Activated CD8-positive, alpha-beta memory T cell treated with anti-CD3 and anti-CD28 coated beads, Interleukin-2, amount 10 ng/mL, durations not matched to agents 7 days and 5 days (primary cell): ENCODE measurements at regions of chr11 and their contacts with region 1.

Region 1: DNA sequence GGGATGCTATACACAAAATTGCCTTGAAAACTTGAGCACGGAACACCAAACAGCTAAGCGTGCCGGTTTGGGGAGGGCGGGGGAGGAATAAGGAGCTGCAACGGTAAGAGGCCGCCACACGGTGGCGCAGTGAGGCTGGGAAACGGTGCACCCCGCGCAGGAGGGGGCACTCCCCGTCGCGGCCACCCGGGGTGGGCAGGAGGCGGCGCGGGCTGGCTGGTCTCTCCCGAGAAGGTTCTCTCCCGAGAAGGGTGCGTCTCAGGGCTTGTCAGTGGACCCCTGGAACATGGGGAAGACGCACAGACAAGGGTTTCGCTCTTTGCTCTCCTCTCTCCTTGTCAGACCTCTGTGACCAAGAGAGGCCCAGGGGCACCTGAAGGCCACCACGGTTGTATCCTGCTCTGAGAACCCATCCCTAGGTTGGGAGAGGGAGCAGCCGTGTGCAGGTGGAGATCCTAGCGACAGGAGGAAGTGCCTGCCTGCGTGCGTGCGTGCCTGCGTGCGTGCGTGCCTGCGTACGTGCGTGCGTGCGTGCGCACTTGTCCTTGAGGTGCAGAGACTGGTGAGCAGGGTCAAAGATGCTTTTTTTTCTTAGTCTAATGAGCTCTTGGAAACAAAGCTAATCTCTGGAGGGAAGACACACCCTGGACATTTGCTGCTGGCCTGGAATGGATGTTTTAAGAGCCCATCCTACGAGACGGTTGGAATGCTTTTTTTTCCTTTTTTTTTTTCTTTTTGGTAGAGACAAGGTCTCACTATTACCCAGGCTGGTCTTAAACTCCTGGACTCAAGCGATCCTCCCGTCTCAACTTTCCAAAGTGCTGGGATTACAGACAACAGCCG is 18.1 kb upstream of the JAM3 start:
- DNase-seq: peak; percentile 78
- ATAC-seq: peak; percentile 96
- H3K4me3 Mint-ChIP-seq: no peak overlapping the region
- H3K27ac Mint-ChIP-seq: peak overlapping the region; percentile 56
- H3K4me1 Mint-ChIP-seq: peaks cover 6% of the 10 kb centered on the region
- H3K27me3 Mint-ChIP-seq: peaks cover 18% of the 10 kb centered on the region

Region 2: DNA sequence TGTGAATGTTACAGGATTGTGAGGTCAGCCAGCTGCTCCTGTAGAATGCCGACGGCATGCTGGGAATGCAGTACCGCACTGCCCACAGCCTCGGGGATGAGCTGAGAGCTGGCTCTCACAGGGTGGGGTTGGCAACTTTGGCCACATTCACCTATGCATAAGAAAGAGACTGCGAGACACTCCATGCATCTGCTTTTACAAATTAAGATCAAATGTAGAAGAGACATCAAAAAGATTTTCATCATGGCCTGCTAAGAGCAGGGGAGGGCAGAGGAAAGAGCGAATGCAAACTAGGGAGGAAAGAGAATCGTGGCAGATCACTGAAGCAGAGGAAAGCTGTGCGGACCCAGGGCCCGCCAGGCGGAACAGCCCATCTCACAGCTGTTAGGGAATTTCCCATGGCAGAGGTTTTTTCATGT is 155.7 kb before region 1 on chr11:
- CTCF ChIA-PET with region 1: no interaction called
- DNase-seq: peak; percentile 4
- ATAC-seq: no peak
- H3K4me3 Mint-ChIP-seq: no peak overlapping the region
- H3K27ac Mint-ChIP-seq: no peak overlapping the region
- H3K4me1 Mint-ChIP-seq: peaks cover 8% of the 10 kb centered on the region
- H3K27me3 Mint-ChIP-seq: no peaks in the 10 kb centered on the region

Region 3: DNA sequence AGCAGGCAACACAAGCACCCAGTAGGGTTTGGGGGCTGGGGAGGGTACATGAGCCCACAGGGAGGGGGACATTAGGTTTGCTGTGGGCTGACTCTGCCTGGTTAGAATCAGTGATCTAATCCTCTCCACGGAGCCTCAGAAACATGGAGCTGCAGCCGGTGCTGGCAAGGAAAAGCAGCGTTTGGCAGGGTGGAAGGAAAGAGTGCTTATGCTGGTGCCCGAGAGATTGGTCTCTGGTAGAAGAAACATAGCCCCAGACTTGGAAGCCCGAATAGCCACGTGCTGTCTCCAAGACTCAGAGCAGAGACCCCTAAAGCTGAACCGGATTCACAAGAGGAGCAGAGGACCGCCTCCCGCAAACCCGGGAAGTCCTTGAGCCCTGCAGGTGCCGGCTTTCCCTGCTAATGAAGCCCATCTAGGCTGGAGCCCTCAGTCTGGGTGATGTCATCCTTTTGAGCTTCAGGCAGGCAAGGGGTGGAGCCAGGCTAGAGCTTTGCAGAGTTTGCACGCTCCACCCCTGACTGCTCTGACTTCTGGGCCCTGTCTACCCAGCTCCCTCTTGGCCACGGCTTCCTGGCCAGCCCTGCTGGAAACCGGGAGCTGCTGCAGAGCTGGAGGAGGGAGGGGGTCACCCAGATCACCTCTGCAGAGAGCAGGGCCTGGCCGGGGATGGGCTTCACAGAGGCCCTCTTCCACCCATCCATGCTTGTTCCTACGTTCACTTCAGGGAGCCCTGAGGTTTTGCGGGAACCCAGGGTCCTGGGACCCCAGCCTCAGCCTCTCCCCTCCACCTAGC is 16.9 kb before region 1 on chr11:
- CTCF ChIA-PET with region 1: interaction called, 40 read pairs
- DNase-seq: peak; percentile 85
- ATAC-seq: peak; percentile 90
- H3K4me3 Mint-ChIP-seq: peak overlapping the region; percentile 23
- H3K27ac Mint-ChIP-seq: peak overlapping the region; percentile 58
- H3K4me1 Mint-ChIP-seq: peaks cover 50% of the 10 kb centered on the region
- H3K27me3 Mint-ChIP-seq: peaks cover 5% of the 10 kb centered on the region

Region 4: GRCh38 chr11:134068829-134069425 is 18.2 kb after region 1 on chr11 and contains the start of gene JAM3:
- CTCF ChIA-PET with region 1: interaction called, 26 read pairs
- DNase-seq: peak; percentile 97
- ATAC-seq: peak; percentile 98
- H3K4me3 Mint-ChIP-seq: peak within 1 kb of the TSS; percentile 91
- H3K27ac Mint-ChIP-seq: peak within 1 kb of the TSS; percentile 63
- H3K4me1 Mint-ChIP-seq: peaks cover 18% of the 10 kb centered on the region
- H3K27me3 Mint-ChIP-seq: peaks cover 69% of the 10 kb centered on the region
- total RNA-seq, gene JAM3: 3.2 to 4.4 TPM

Region 5: DNA sequence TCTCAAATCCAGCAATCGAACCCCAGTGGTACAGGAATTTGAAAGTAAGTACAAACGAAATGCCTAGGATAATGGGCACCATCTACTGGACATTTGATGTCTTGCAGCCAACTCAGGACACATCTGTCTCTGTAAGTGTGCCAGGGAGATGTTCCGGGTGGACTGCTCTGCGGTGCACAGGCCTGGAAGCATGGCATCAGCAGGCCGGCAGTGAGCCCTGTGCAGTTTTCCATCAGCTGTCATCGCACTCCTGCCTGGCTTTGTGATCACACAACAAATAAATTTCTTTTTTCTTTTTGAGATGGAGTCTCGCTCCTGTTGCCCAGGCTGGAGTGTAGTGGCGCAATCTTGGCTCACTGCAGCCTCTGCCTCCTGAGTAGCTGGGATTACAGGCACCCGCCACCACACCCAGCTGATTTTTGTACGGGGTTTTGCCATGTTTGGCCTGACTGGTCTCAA is 89.1 kb after region 1 on chr11:
- CTCF ChIA-PET with region 1: interaction called, 26 read pairs
- DNase-seq: peak; percentile 73
- ATAC-seq: peak; percentile 78
- H3K4me3 Mint-ChIP-seq: no peak overlapping the region
- H3K27ac Mint-ChIP-seq: no peak overlapping the region
- H3K4me1 Mint-ChIP-seq: peaks cover 9% of the 10 kb centered on the region
- H3K27me3 Mint-ChIP-seq: no peaks in the 10 kb centered on the region